RWPE1 (cell line): ENCODE measurements at regions of chr5 and their contacts with region 1.

Region 1: GRCh38 chr5:10627160-10627701 is 63.4 kb downstream of the ANKRD33B start:
- DNase-seq: peak; percentile 20
- H3K27ac ChIP-seq: peak overlapping the region; percentile 73
- CTCF ChIP-seq: no peak

Region 2: GRCh38 chr5:9197881-9198260 is 1429.4 kb before region 1 on chr5:
- CTCF ChIA-PET with region 1: no interaction called
- POLR2A ChIA-PET with region 1: no interaction called
- DNase-seq: no peak
- H3K27ac ChIP-seq: no peak overlapping the region
- CTCF ChIP-seq: no peak

Region 3: GRCh38 chr5:10452768-10453331 is 174.4 kb before region 1 on chr5:
- CTCF ChIA-PET with region 1: interaction called, 55 read pairs
- POLR2A ChIA-PET with region 1: no interaction called
- DNase-seq: peak; percentile 79
- H3K27ac ChIP-seq: peak overlapping the region; percentile 81
- CTCF ChIP-seq: peak; percentile 85